ENCODE measurements at regions of chr19 and their contacts with region 1.

Region 1: GRCh38 chr19:37466798-37467607 is at the start of gene ZNF569:
- DNase-seq: peak; percentile 93
- H3K4me3 ChIP-seq: peak within 1 kb of the TSS; percentile 62 to 86 (median 64)
- H3K27ac ChIP-seq: no peak within 1 kb of the TSS
- H3K4me1 ChIP-seq: no peaks in the 10 kb centered on the region
- H3K27me3 ChIP-seq: no peaks in the 10 kb centered on the region
- CTCF ChIP-seq: no peak
- total RNA-seq, gene ZNF569: 5.5 to 6.0 TPM

Region 2: DNA sequence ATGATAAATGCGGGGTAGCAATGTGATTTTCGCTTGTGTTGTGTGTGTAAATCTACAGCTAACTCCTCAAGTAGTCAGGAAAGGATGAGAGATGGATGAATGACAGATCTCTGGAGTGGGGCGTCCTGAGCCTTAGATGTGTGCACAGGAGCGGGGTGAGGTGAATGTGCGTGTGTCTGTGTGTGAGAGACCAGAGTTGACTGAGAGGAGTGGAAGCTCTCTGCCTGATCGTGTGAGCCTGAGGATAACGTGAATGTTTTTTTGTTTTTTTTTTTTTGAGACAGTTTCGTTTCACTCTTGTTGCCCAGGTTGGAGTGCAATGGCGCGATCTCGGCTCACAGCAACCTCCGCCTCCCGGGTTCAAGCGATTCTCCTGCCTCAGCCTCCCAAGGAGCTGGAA is 801.2 kb before region 1 on chr19:
- CTCF ChIA-PET with region 1: no interaction called
- dilution Hi-C with region 1: no loop called
- in situ Hi-C with region 1: no loop called
- intact Hi-C with region 1: loop called (anchors 2 kb)
- DNase-seq: no peak
- H3K4me3 ChIP-seq: peak overlapping the region; percentile 79 to 94 (median 92)
- H3K27ac ChIP-seq: peak overlapping the region; percentile 38
- H3K4me1 ChIP-seq: peaks cover 3% of the 10 kb centered on the region
- H3K27me3 ChIP-seq: no peaks in the 10 kb centered on the region
- CTCF ChIP-seq: no peak

Region 3: DNA sequence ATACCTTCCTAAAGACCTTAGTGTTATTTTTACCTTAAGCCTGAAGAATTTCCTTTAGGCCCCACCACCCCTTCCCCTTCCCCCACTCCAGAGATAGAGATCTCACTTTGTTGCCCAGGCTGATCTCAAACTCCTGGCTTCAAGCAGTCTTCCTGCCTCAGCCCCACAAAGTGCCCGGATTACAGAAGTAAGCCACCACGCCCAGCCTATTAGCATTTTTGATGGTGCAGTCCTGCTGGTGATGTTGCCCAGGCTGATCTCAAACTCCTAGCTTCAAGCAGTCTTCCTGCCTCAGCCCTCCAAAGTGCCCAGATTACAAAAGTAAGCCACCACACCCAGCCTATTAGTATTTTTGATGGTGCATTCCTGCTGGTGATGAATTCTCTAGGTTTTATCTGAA is 757.6 kb before region 1 on chr19:
- CTCF ChIA-PET with region 1: no interaction called
- dilution Hi-C with region 1: no loop called
- in situ Hi-C with region 1: no loop called
- intact Hi-C with region 1: no loop called
- DNase-seq: no peak
- H3K4me3 ChIP-seq: no peak overlapping the region
- H3K27ac ChIP-seq: no peak overlapping the region
- H3K4me1 ChIP-seq: no peaks in the 10 kb centered on the region
- H3K27me3 ChIP-seq: no peaks in the 10 kb centered on the region
- CTCF ChIP-seq: no peak

Region 4: DNA sequence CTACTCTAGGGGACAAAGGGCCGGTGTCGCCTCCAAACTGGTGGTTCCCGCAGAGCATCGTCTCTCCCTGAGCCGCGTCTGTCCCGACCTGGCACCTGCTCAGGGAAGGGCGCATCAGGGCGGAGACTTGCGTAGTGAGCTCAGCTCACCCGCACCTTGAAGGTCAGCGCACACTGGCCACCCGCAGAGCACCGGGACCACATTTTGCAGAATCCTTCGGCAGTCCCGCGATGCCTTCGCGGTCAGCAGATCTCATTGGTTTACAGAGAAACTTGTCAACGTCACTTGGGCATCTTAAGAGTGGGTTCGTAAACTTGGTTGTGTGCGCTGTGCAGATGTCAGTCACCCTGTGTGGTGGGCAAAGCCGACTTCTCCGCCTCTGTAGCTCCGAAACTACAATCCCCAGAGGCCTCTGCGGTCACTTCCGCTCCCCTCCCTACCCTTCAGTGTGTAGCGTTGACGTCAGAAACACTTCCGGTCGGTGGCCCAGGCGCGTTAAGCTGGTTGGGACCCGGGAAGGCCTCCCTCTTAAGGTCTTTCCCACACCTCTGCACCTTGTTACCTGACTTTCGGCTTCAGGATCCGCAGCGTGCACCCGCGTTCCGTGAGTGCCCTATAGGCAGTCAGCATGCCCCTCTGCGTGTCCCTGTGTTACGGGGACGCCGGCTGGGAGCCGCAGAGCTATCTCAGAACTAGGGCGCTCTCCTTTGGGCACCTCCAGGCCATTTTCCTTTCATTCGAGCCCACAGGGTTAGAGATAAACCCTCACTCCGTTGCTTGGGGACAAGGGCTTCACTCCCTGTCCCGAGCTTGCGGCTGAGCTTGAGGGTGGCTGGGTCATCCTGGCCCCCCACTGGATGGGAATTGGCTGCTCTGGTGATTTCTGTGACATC is 132.6 kb before region 1 on chr19:
- CTCF ChIA-PET with region 1: no interaction called
- dilution Hi-C with region 1: no loop called
- in situ Hi-C with region 1: no loop called
- intact Hi-C with region 1: loop called (anchors 5 kb)
- DNase-seq: peak; percentile 84
- H3K4me3 ChIP-seq: peak overlapping the region; percentile 79 to 89 (median 82)
- H3K27ac ChIP-seq: peak overlapping the region; percentile 85
- H3K4me1 ChIP-seq: peaks cover 8% of the 10 kb centered on the region
- H3K27me3 ChIP-seq: no peaks in the 10 kb centered on the region
- CTCF ChIP-seq: no peak

Region 5: GRCh38 chr19:37492213-37492612 is 25.2 kb after region 1 on chr19:
- CTCF ChIA-PET with region 1: no interaction called
- dilution Hi-C with region 1: no loop called
- in situ Hi-C with region 1: no loop called
- intact Hi-C with region 1: no loop called
- DNase-seq: no peak
- H3K4me3 ChIP-seq: no peak overlapping the region
- H3K27ac ChIP-seq: no peak overlapping the region
- H3K4me1 ChIP-seq: no peaks in the 10 kb centered on the region
- H3K27me3 ChIP-seq: no peaks in the 10 kb centered on the region
- CTCF ChIP-seq: no peak

Region 6: GRCh38 chr19:37506387-37507166 is 39.6 kb after region 1 on chr19 and contains the start of gene ZNF793:
- CTCF ChIA-PET with region 1: no interaction called
- dilution Hi-C with region 1: no loop called
- in situ Hi-C with region 1: no loop called
- intact Hi-C with region 1: loop called (anchors 2 kb)
- DNase-seq: peak; percentile 90
- H3K4me3 ChIP-seq: peak within 1 kb of the TSS; percentile 50 to 76 (median 65)
- H3K27ac ChIP-seq: peak within 1 kb of the TSS; percentile 79
- H3K4me1 ChIP-seq: no peaks in the 10 kb centered on the region
- H3K27me3 ChIP-seq: no peaks in the 10 kb centered on the region
- CTCF ChIP-seq: no peak
- total RNA-seq, gene ZNF793: 6.0 to 6.2 TPM

Region 7: GRCh38 chr19:37519890-37520289 is 52.9 kb after region 1 on chr19:
- CTCF ChIA-PET with region 1: no interaction called
- dilution Hi-C with region 1: no loop called
- in situ Hi-C with region 1: no loop called
- intact Hi-C with region 1: no loop called
- DNase-seq: peak; percentile 76
- H3K4me3 ChIP-seq: no peak overlapping the region
- H3K27ac ChIP-seq: no peak overlapping the region
- H3K4me1 ChIP-seq: no peaks in the 10 kb centered on the region
- H3K27me3 ChIP-seq: no peaks in the 10 kb centered on the region
- CTCF ChIP-seq: no peak

Region 8: GRCh38 chr19:37655689-37656371 is 188.8 kb after region 1 on chr19:
- CTCF ChIA-PET with region 1: no interaction called
- dilution Hi-C with region 1: no loop called
- in situ Hi-C with region 1: no loop called
- intact Hi-C with region 1: loop called (anchors 5 kb)
- DNase-seq: peak; percentile 86
- H3K4me3 ChIP-seq: peak overlapping the region; percentile 74 to 87 (median 79)
- H3K27ac ChIP-seq: peak overlapping the region; percentile 67
- H3K4me1 ChIP-seq: peaks cover 2% of the 10 kb centered on the region
- H3K27me3 ChIP-seq: no peaks in the 10 kb centered on the region
- CTCF ChIP-seq: no peak

Region 9: DNA sequence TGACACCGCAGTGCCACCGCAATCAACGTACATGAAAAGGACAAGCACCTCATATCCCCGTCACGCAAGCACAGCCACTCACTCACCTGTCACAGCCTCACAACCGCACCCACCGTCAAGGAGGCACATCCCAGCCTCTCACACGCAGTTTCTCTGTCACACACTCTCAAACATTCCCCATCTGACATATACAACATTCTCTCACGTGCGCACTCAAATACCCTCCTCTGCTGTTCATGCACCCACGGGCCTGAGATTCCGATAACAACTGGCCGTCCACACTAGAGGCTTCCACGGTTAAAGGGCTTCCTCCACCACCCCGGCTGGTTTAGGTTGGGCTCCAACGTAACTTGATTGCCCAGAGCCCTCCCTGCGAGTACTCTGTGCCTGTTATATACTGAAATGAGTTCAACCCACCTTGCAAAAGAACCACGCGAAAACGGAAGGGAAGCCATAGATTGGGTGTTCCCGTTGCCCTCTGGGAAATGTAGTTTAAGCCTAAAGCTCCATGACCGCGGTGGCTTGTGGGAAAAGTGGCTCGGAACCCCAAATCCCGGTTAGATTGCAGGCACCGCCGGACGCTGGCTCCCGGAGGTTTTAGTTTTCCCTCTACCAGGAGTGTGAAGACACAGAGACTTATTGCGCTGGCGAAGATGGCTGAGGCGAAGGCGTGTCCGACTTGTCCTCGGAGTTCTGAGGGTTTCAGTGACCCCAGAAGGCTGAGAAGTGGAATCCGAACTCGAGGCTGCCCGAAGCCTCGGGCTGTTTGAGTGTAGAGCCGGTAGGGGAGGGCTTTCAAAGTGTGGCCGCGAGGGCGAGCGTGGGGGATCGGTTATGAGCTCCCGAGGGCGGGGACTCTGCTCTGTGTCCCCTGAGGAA is 312.4 kb after region 1 on chr19 and contains the start of gene ZNF573:
- CTCF ChIA-PET with region 1: no interaction called
- dilution Hi-C with region 1: no loop called
- in situ Hi-C with region 1: no loop called
- intact Hi-C with region 1: loop called (anchors 2 kb)
- DNase-seq: peak; percentile 89
- H3K4me3 ChIP-seq: peak within 1 kb of the TSS; percentile 60 to 79 (median 63)
- H3K27ac ChIP-seq: peak within 1 kb of the TSS; percentile 34
- H3K4me1 ChIP-seq: peaks cover 5% of the 10 kb centered on the region
- H3K27me3 ChIP-seq: no peaks in the 10 kb centered on the region
- CTCF ChIP-seq: peak in 1 of 2 donors; percentile 12
- total RNA-seq, gene ZNF573: 5.5 to 8.7 TPM